Caco-2 (cell line): ENCODE measurements at regions of chr14 and their contacts with region 1.

Region 1: GRCh38 chr14:75002392-75003249 is at the start of gene EIF2B2:
- DNase-seq: peak; percentile 98
- H3K4me3 ChIP-seq: peak within 1 kb of the TSS; percentile 82
- H3K4me3 Mint-ChIP-seq: peak within 1 kb of the TSS; percentile 87
- H3K27ac Mint-ChIP-seq: peak within 1 kb of the TSS; percentile 86
- H3K4me1 ChIP-seq: peaks cover 6% of the 10 kb centered on the region; the same call in 1 of the 2 replicates
- H3K4me1 Mint-ChIP-seq: peaks cover 7% of the 10 kb centered on the region
- H3K27me3 ChIP-seq: no peaks in the 10 kb centered on the region
- H3K27me3 Mint-ChIP-seq: no peaks in the 10 kb centered on the region
- CTCF ChIP-seq: peak in 1 of 2 experiments; percentile 29
- total RNA-seq, gene EIF2B2: 48.8 and 54.4 TPM in 2 replicates

Region 2: DNA sequence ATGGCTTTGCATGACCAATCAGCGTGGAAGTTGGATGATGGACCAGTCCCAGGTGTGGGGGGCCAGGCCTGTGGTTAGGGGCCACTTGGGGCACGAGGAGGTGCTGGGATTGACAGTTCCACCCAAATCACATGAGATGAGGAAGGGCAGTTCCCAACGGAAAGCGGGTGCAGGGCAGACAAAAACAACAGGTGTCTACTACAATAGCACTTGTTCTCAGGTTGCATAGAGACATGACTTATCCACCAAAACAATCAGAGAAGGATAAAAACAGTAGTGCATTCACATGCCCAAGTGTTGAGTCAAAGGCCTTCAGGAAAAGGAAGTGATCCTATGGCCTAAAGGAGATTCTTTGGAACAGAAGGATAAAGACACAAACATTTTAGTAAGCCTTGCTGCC is 14.5 kb before region 1 on chr14:
- CTCF ChIA-PET with region 1: no interaction called
- POLR2A ChIA-PET with region 1: no interaction called
- intact Hi-C with region 1: no loop called
- DNase-seq: no peak
- H3K4me3 ChIP-seq: no peak overlapping the region
- H3K4me3 Mint-ChIP-seq: no peak overlapping the region
- H3K27ac Mint-ChIP-seq: no peak overlapping the region
- H3K4me1 ChIP-seq: peaks cover 3% of the 10 kb centered on the region; the same call in 1 of the 2 replicates
- H3K4me1 Mint-ChIP-seq: no peaks in the 10 kb centered on the region
- H3K27me3 ChIP-seq: no peaks in the 10 kb centered on the region
- H3K27me3 Mint-ChIP-seq: no peaks in the 10 kb centered on the region
- CTCF ChIP-seq: no peak

Region 3: GRCh38 chr14:75022655-75023054 is 20.0 kb after region 1 on chr14:
- CTCF ChIA-PET with region 1: no interaction called
- POLR2A ChIA-PET with region 1: no interaction called
- intact Hi-C with region 1: loop called (anchors 1 kb)
- DNase-seq: peak; percentile 47 to 50
- H3K4me3 ChIP-seq: no peak overlapping the region
- H3K4me3 Mint-ChIP-seq: no peak overlapping the region
- H3K27ac Mint-ChIP-seq: no peak overlapping the region
- H3K4me1 ChIP-seq: peaks cover 14% of the 10 kb centered on the region
- H3K4me1 Mint-ChIP-seq: peaks cover 18% of the 10 kb centered on the region
- H3K27me3 ChIP-seq: no peaks in the 10 kb centered on the region
- H3K27me3 Mint-ChIP-seq: no peaks in the 10 kb centered on the region
- CTCF ChIP-seq: peak; percentile 51 to 62

Region 4: DNA sequence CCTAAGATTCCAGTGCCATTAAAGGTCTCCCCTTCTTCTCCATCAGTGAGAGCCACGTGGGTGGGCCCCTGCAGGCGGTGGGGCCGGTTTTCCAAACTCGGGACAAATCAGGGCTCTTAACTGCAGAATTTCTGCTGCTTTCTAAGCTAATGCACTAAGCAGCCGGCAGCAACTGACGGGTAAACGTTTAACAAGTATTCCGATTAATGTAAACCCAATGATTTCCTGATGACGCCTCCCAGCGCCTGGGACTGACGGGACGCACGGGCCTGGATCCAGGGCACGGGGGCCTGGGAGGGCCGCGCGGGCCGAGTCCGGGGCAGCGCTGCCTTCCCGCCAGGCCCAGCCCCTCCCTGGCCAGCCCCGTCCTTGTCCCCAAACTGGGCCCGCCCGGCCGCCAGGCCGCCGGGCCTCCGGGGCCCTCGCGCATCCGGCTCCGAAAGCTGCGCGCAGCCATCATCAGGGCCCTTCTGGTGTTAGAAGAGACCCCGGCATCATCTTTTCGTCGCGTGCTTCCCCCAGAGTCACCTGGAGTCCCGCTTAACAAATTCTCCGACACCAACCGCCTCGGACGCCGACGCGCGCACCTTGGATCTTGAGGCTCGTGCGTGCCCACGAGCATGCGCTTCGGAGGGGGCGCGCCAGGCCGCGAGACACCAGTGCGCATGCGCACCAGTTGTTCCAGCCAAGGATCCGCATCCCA is 48.4 kb after region 1 on chr14 and contains the start of gene MLH3:
- CTCF ChIA-PET with region 1: no interaction called
- POLR2A ChIA-PET with region 1: no interaction called
- intact Hi-C with region 1: loop called (anchors 1 kb)
- DNase-seq: peak; percentile 88 to 90
- H3K4me3 ChIP-seq: peak within 1 kb of the TSS; percentile 62
- H3K4me3 Mint-ChIP-seq: peak within 1 kb of the TSS; percentile 85
- H3K27ac Mint-ChIP-seq: peak within 1 kb of the TSS; percentile 86
- H3K4me1 ChIP-seq: peaks cover 10% of the 10 kb centered on the region
- H3K4me1 Mint-ChIP-seq: peaks cover 5% of the 10 kb centered on the region
- H3K27me3 ChIP-seq: no peaks in the 10 kb centered on the region
- H3K27me3 Mint-ChIP-seq: no peaks in the 10 kb centered on the region
- CTCF ChIP-seq: no peak
- total RNA-seq, gene MLH3: 23.2 and 24.5 TPM in 2 replicates